ENCODE measurements at regions of chr2 and their contacts with region 1.

Region 1: DNA sequence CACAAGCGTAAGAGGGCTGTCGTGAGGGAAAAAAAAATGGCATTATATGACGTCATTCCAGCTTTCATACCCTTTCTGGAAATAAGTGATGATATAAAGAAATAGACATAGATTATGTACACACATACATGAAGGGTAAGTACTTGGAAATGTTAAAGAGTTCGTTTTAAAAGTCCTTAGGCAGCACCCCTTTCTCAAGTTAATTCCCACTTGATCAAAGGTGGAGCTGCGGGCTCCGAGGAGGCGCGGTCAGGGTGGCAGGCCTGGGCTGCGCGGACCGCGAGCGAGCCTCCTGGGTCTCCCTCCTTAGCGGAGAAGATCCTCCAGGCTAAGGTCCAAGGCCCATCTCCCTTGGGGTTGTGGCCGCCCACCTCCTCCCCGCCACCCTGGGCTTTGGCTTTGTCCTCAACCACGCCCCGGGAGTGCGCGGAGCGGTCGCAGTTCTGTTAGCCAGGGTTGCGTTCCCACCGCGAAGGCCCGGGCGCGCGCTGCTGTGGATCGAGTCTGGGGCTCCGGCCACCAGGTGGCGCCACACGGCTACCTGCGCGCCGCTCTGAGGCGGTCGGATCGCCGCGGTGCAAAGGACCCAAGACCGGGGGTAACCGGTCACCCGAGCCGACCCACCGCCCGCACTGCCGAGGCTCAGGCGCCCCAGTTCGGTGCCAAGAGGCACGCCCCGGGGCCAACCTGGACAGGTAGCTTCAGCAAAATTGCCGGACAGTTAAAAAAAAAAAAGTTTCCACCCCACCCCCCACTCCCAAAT is 66.8 kb downstream of the HNRNPLL start:
- DNase-seq: peak; percentile 70 to 99 (median 84)
- ATAC-seq: peak; percentile 99
- H3K4me3 ChIP-seq: peak overlapping the region; percentile 23 to 36
- H3K27ac ChIP-seq: no peak overlapping the region
- H3K4me1 ChIP-seq: peaks cover 0 to 11% of the 10 kb centered on the region in 2 donors
- H3K27me3 ChIP-seq: no peaks in the 10 kb centered on the region
- CTCF ChIP-seq: peak; percentile 75 to 91

Region 2: DNA sequence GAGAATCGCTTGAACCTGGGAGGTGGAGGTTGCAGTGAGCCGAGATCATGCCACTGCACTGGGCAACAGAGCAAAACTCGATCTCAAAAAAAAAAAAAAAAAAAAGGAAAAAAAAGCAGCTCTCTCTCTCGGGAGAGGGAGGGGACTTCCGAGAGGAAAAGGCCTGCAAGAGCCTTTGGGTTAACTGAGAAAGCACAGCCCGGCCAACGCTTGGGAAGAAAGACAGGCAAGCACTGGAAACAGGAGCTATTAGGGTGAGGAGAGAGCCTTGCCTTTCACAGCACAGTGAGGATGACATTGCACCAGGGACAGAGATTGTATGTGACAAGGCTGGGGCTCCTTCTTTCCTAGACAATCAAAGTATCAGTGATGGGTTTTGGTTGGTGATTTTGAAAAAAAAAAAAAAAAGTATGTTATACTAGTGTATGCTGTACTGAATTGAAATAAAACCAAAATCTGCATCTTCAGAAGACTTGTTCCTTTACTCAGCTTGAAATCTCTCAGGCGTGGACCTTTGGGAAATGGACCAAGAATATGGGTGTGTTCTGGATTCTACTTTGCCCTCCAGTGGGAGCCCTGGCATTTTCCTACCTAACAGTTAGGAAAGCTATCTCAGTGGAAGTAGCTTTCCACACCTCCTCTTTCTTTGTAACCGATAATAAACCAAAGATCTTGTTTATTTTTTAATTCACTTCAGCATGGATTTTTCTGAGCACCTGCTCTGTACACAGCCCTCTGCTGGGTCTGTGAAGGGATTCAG is 198.6 kb after region 1 on chr2:
- intact Hi-C with region 1: loop called in 1 of 2 experiments (anchors 5 kb)
- DNase-seq: no peak
- ATAC-seq: no peak
- H3K4me3 ChIP-seq: no peak overlapping the region
- H3K27ac ChIP-seq: no peak overlapping the region
- H3K4me1 ChIP-seq: peaks cover 6 to 30% of the 10 kb centered on the region in 2 donors
- H3K27me3 ChIP-seq: no peaks in the 10 kb centered on the region
- CTCF ChIP-seq: no peak

Region 3: GRCh38 chr2:38911191-38911590 is 375.3 kb after region 1 on chr2:
- intact Hi-C with region 1: no loop called
- DNase-seq: no peak
- ATAC-seq: no peak
- H3K4me3 ChIP-seq: no peak overlapping the region
- H3K27ac ChIP-seq: no peak overlapping the region
- H3K4me1 ChIP-seq: no peaks in the 10 kb centered on the region
- H3K27me3 ChIP-seq: no peaks in the 10 kb centered on the region
- CTCF ChIP-seq: no peak